Body of pancreas (tissue), 4 donors: ENCODE measurements at regions of chr7 and their contacts with region 1.

Region 1: DNA sequence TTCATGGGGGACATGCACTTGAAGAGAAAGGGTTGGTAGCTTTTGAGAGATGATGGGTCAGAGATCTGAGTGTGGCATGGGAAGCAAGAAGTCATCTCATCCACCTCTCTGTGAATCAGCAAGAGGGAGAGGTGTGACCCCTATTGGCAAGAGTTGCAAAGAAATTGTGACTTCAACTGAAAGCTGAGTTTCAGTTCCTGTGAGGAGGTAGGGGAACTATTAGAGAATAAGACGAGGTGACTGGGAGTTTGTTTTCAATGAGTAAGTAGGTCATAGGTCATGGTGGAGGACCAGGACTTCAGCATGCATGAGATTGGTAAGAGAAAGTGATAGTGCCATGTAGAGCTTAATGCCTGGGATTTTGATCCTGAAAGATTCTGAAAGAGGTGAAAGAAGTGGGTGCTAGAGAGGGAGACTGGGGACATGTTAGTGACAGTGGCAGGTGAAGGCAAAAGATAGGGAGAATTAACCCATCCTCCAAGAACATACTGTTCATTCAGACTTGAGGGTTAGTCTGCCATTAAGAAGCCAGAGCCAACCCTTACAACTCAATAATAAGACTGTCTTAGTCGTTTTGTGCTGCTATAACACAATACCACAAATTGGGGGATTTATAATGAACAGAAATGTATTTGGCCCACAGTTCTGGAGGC is 75.5 kb upstream of the CAPZA2 start:
- DNase-seq: peak in 2 of 4 donors; percentile 16 to 24
- ATAC-seq: peak; percentile 50
- H3K4me3 ChIP-seq: no peak overlapping the region
- H3K27ac ChIP-seq: no peak overlapping the region
- H3K4me1 ChIP-seq: peaks cover 6% of the 10 kb centered on the region
- H3K27me3 ChIP-seq: no peaks in the 10 kb centered on the region
- CTCF ChIP-seq: peak in 6 of 7 experiments; percentile 24 to 66 (median 54)
- POLR2A ChIP-seq: no peak

Region 2: DNA sequence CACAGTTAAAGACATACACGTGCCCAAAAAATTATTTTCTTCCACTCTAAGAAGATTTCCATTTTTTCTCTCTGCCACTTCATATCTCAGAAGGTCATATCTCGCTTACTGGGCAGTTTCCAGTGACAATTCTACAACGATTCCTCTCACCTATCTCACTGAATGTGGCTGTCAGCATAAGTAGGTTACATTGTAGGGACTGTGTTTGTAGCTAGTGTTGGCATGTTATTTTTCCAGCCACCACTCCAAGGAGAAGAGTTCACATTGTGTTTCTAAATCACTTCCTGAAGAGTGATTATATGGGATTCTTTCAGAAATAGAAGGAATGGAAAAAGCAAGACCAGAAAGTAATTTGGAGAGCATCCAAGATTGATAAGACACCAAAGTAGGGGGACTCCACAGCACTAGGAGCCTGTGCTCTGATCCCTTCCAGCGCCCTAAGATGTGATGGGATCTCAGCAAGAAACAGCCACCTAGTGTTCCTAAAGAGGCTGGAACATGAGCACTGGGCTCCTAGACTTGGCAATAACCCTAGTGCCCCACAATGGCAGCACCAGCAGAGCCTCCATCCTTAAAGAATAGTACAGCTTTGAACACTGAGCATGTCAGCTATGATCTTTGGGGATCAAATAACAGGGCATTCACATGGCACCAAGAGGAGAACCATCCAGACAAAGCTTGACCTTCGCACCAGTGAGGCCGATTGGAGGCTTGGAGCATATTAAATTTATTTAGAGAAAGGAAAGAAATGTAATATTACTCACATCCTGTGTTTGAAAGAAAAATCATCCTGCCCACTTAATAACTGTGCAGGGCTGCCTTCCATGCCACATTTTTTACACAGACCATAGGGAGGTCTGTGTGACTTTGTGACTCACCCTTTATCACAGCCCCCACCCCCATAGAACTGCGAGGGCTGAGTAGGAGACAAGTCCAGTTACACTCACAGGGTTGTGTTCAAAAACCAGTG is 210.3 kb before region 1 on chr7:
- intact Hi-C with region 1: no loop called
- DNase-seq: peak in 1 of 4 donors; percentile 25
- ATAC-seq: no peak
- H3K4me3 ChIP-seq: no peak overlapping the region
- H3K27ac ChIP-seq: no peak overlapping the region
- H3K4me1 ChIP-seq: peaks cover 15% of the 10 kb centered on the region
- H3K27me3 ChIP-seq: no peaks in the 10 kb centered on the region
- CTCF ChIP-seq: no peak
- POLR2A ChIP-seq: no peak

Region 3: DNA sequence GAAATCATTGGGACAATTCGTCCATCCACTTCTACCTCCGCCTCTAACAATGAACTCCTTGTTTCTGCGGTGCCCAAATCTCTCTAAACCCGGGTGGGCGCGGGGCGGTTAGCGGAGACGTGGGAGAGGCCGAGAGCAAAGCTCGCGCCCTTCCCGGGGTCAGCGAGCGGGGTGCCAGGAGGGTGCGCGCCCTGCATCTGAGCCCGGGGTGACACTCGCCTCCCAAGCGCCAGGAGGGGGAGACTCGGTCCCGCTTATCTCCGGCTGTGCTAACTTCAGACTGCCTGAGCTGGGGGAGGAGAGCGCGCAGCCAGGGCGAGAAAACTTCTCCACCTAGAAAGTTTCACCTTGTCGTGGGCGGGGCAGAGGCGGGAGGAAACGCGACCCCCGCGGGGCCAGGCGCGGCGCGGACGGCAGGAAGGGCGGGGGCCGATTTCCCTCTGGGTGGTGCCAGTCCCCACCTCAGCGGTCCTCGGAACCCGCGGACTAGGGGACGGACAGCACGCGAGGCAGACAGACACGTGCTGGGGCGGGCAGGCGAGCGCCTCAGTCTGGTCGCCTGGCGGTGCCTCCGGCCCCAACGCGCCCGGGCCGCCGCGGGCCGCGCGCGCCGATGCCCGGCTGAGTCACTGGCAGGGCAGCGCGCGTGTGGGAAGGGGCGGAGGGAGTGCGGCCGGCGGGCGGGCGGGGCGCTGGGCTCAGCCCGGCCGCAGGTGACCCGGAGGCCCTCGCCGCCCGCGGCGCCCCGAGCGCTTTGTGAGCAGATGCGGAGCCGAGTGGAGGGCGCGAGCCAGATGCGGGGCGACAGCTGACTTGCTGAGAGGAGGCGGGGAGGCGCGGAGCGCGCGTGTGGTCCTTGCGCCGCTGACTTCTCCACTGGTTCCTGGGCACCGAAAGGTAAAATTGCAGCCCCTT is 115.0 kb before region 1 on chr7 and contains the start of gene MET:
- intact Hi-C with region 1: loop called (anchors 10 kb)
- DNase-seq: peak; percentile 86 to 92 (median 90)
- ATAC-seq: peak; percentile 90
- H3K4me3 ChIP-seq: peak within 1 kb of the TSS; percentile 39 to 64
- H3K27ac ChIP-seq: peak within 1 kb of the TSS; percentile 91 to 95 (median 92)
- H3K4me1 ChIP-seq: peaks cover 18% of the 10 kb centered on the region
- H3K27me3 ChIP-seq: no peaks in the 10 kb centered on the region
- CTCF ChIP-seq: peak; percentile 11 to 85 (median 75)
- POLR2A ChIP-seq: peak; percentile 66 to 74 (median 73)
- total RNA-seq, gene MET: 21.3 to 23.7 TPM

Region 4: GRCh38 chr7:116809636-116810266 is 22.8 kb after region 1 on chr7:
- intact Hi-C with region 1: loop called (anchors 2 kb)
- DNase-seq: peak in 3 of 4 donors; percentile 18 to 57 (median 38)
- ATAC-seq: peak; percentile 90
- H3K4me3 ChIP-seq: no peak overlapping the region
- H3K27ac ChIP-seq: peak overlapping the region; percentile 35 to 81 (median 62)
- H3K4me1 ChIP-seq: peaks cover 31% of the 10 kb centered on the region
- H3K27me3 ChIP-seq: no peaks in the 10 kb centered on the region
- CTCF ChIP-seq: peak; percentile 34 to 93 (median 76)
- POLR2A ChIP-seq: no peak